Psoas muscle (tissue), 8 donors: ENCODE measurements at regions of chr1 and their contacts with region 1.

Region 1: DNA sequence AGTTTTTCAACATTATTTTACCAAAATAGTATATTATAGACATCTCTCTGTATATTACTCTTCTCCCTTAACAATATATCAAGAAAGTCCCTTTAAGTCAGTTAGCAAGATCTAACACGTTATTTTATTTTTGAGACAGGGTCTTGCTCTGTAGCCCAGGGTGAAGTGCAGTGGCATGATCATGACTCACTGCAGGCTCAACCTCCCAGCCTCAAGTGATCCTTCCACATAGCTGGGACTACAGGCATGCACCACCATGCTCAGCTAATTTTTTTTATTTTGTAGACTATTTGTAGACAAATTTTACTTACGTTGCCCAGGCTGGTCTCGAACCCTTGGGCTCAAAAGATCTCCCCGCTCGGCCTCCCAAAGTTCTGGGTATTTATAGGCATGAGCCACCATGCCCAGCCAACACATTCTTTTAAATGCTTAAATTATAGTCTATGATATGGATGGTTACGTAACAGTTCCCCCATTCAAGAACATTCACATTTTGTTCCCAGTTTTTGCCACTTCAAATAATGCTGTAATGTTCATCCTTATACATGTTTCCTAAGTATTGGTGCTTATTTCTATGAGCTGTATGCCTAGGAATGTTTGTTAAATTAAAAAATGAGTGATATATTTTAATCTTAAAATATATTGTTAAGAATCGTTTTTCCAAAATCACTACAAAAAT is 70.4 kb downstream of the TUT4 start:
- DNase-seq: no peak
- ATAC-seq: peak in 2 of 4 donors; percentile 32 to 48
- H3K4me3 ChIP-seq: no peak overlapping the region
- H3K27ac ChIP-seq: no peak overlapping the region
- H3K4me1 ChIP-seq: no peaks in the 10 kb centered on the region
- H3K27me3 ChIP-seq: no peaks in the 10 kb centered on the region
- CTCF ChIP-seq: no peak

Region 2: DNA sequence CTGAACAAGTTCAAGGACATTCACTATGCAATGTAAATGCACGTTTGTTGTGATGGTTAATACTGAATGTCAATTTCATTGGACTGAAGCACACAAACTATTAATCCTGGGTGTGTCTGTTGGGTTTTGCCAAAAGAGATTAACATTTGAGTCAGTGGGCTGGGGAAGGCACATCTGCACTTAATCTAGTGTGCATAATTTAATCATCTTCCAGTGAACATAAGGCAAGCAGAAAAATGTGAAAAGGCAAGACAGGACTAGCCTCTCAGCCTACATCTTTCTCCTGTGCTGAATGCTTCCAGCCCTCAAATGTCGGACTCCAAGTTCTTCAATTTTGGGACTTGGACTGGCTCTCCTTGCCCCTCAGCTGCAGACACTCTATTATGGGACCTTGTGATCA is 38.0 kb before region 1 on chr1:
- intact Hi-C with region 1: no loop called
- DNase-seq: no peak
- ATAC-seq: no peak
- H3K4me3 ChIP-seq: no peak overlapping the region
- H3K27ac ChIP-seq: no peak overlapping the region
- H3K4me1 ChIP-seq: no peaks in the 10 kb centered on the region
- H3K27me3 ChIP-seq: no peaks in the 10 kb centered on the region
- CTCF ChIP-seq: no peak

Region 3: GRCh38 chr1:52683367-52683940 is 201.0 kb after region 1 on chr1:
- intact Hi-C with region 1: loop called in 1 of 2 experiments (anchors 10 kb)
- DNase-seq: no peak
- ATAC-seq: no peak
- H3K4me3 ChIP-seq: no peak overlapping the region
- H3K27ac ChIP-seq: no peak overlapping the region
- H3K4me1 ChIP-seq: peaks cover 8% of the 10 kb centered on the region
- H3K27me3 ChIP-seq: no peaks in the 10 kb centered on the region
- CTCF ChIP-seq: no peak